Mammary epithelial cell (primary cell): ENCODE measurements at regions of chr20 and their contacts with region 1.

Region 1: DNA sequence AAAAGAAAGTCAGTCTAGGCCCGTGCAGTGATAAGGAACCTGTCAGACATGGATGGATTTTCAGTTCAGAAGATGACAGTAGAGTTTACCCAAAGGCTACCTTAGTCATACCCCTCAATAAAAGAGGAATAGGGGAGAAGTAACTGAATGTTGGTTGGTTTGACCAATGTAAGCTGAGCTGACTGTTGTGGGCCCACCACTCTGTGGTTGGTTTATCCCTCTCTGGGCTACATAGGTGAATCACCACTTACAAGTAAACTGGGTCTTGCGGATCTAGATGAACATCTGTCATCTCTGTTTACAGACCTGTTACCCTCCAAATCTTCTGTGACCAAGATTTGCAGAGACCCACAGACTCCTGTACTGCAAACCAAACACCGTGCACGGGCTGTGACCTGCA is 37.2 kb upstream of the MYLK2 start:
- DNase-seq: no peak
- H3K4me3 ChIP-seq: no peak overlapping the region
- H3K27ac ChIP-seq: no peak overlapping the region
- H3K4me1 ChIP-seq: no peaks in the 10 kb centered on the region
- H3K27me3 ChIP-seq: no peaks in the 10 kb centered on the region
- CTCF ChIP-seq: no peak

Region 2: GRCh38 chr20:31723319-31724078 is 58.4 kb before region 1 on chr20:
- CTCF ChIA-PET with region 1: no interaction called
- dilution Hi-C with region 1: no loop called
- in situ Hi-C with region 1: no loop called
- intact Hi-C with region 1: no loop called
- DNase-seq: peak; percentile 96
- H3K4me3 ChIP-seq: peak overlapping the region; percentile 78 to 89 (median 86)
- H3K27ac ChIP-seq: peak overlapping the region; percentile 89
- H3K4me1 ChIP-seq: peaks cover 26% of the 10 kb centered on the region
- H3K27me3 ChIP-seq: no peaks in the 10 kb centered on the region
- CTCF ChIP-seq: peak; percentile 89 to 93

Region 3: DNA sequence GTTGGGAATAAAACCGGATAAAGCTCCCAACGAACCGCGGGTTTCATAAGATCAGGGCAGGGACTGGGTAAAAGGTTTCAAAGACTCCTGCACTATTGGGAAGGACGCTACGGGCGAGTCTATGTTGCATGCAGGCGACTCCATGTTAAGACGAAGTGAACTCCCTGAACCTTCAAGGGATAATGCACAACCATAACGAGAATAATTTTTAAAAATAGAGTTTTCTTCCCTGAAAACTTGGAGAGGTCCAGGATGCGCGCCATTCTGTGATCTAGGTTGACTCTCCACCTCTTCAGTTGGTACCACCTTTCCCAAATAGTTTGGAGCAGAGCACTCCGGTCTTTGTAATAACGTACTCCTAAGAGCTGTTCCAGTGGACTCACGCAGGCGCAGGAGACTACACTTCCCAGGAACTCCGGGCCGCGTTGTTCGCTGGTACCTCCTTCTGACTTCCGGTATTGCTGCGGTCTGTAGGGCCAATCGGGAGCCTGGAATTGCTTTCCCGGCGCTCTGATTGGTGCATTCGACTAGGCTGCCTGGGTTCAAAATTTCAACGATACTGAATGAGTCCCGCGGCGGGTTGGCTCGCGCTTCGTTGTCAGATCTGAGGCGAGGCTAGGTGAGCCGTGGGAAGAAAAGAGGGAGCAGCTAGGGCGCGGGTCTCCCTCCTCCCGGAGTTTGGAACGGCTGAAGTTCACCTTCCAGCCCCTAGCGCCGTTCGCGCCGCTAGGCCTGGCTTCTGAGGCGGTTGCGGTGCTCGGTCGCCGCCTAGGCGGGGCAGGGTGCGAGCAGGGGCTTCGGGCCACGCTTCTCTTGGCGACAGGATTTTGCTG is 43.0 kb before region 1 on chr20 and contains the start of gene TPX2:
- CTCF ChIA-PET with region 1: no interaction called
- dilution Hi-C with region 1: no loop called
- in situ Hi-C with region 1: no loop called
- intact Hi-C with region 1: loop called (anchors 5 kb)
- DNase-seq: peak; percentile 96
- H3K4me3 ChIP-seq: peak within 1 kb of the TSS; percentile 77 to 96 (median 85)
- H3K27ac ChIP-seq: peak within 1 kb of the TSS; percentile 92
- H3K4me1 ChIP-seq: peaks cover 4% of the 10 kb centered on the region
- H3K27me3 ChIP-seq: no peaks in the 10 kb centered on the region
- CTCF ChIP-seq: peak in 1 of 2 donors; percentile 33
- total RNA-seq, gene TPX2: 9.5 to 74.3 TPM